Dendritic cell treated with granulocyte-macrophage colony-stimulating factor and Interleukin-4, amounts not matched to agents 40 ng/mL and 50 ng/mL, for 4 days (primary cell): ENCODE measurements at regions of chr17 and their contacts with region 1.

Region 1: GRCh38 chr17:15233022-15233805 is 31.9 kb downstream of the PMP22 start:
- H3K4me3 Mint-ChIP-seq: no peak overlapping the region
- H3K27ac Mint-ChIP-seq: peak overlapping the region; percentile 10
- H3K4me1 Mint-ChIP-seq: peaks cover 39% of the 10 kb centered on the region
- H3K27me3 Mint-ChIP-seq: peaks cover 5% of the 10 kb centered on the region

Region 2: GRCh38 chr17:15083225-15083624 is 150.0 kb before region 1 on chr17:
- intact Hi-C with region 1: no loop called
- H3K4me3 Mint-ChIP-seq: no peak overlapping the region
- H3K27ac Mint-ChIP-seq: no peak overlapping the region
- H3K4me1 Mint-ChIP-seq: no peaks in the 10 kb centered on the region
- H3K27me3 Mint-ChIP-seq: peaks cover 4% of the 10 kb centered on the region

Region 3: GRCh38 chr17:15409721-15410250 is 176.6 kb after region 1 on chr17:
- intact Hi-C with region 1: no loop called
- H3K4me3 Mint-ChIP-seq: no peak overlapping the region
- H3K27ac Mint-ChIP-seq: no peak overlapping the region
- H3K4me1 Mint-ChIP-seq: peaks cover 16% of the 10 kb centered on the region
- H3K27me3 Mint-ChIP-seq: no peaks in the 10 kb centered on the region

Region 4: DNA sequence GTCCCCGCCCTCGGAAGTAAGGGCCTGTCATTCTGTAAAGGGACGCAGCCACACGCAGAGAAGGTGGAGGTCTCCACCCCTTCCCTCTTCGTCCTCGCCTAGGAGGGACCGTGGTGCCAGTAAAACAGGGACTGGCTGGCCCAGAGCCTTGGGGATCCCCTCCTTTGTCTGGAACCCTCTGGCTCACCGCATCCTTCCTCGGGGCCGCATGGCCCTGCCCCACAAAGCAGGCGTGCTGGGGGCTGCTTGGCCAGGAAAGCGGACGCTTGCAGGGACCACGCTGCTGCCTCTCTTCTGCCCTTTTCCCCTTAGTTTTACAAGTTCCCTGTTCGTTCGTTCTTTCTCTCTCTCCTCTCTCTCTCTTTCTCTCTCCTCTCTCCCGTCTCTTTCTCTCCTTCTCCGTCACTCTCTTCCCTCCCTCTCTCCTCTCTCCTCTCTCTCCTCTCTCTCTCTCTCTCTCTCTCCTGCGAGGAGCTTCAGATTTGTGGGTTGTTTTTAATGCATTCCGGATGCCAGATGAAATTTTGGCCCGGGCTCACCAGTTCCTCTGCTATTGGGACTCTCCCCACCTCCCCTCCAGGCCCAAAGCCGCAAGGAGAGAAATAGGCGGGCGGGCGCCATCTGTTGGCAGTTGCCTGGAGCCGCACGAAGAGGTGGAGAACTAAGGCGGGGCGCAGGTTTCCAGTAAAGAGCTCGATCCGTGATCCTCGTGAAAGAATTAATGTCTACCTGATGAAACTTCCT is 269.3 kb after region 1 on chr17:
- intact Hi-C with region 1: loop called (anchors 2 kb)
- H3K4me3 Mint-ChIP-seq: peak overlapping the region; percentile 11
- H3K27ac Mint-ChIP-seq: peak overlapping the region; percentile 17
- H3K4me1 Mint-ChIP-seq: peaks cover 7% of the 10 kb centered on the region
- H3K27me3 Mint-ChIP-seq: peaks cover 3% of the 10 kb centered on the region